ENCODE measurements at regions of chr7 and their contacts with region 1.

Region 1: GRCh38 chr7:107743567-107744344 is at the start of gene CBLL1:
- DNase-seq: peak; percentile 97
- ATAC-seq: peak; percentile 89
- H3K4me3 ChIP-seq: peak within 1 kb of the TSS; percentile 66 to 90 (median 89)
- H3K4me3 Mint-ChIP-seq: peak within 1 kb of the TSS; percentile 99
- H3K27ac ChIP-seq: peak within 1 kb of the TSS; percentile 97
- H3K27ac Mint-ChIP-seq: peak within 1 kb of the TSS; percentile 100
- H3K4me1 ChIP-seq: peaks cover 26 to 30% of the 10 kb centered on the region in 2 donors
- H3K4me1 Mint-ChIP-seq: peaks cover 45% of the 10 kb centered on the region
- H3K27me3 ChIP-seq: no peaks in the 10 kb centered on the region
- H3K27me3 Mint-ChIP-seq: no peaks in the 10 kb centered on the region
- CTCF ChIP-seq: peak; percentile 67
- total RNA-seq, gene CBLL1: 49.9 and 57.2 TPM in 2 replicates

Region 2: GRCh38 chr7:107168233-107169119 is 575.3 kb before region 1 on chr7 and contains the start of gene HBP1:
- CTCF ChIA-PET with region 1: interaction called, 10 read pairs
- POLR2A ChIA-PET with region 1: interaction called, 38 read pairs
- intact Hi-C with region 1: loop called (anchors 1 kb)
- DNase-seq: peak; percentile 99
- ATAC-seq: peak; percentile 80
- H3K4me3 ChIP-seq: peak within 1 kb of the TSS; percentile 88 to 97 (median 95)
- H3K4me3 Mint-ChIP-seq: peak within 1 kb of the TSS; percentile 94
- H3K27ac ChIP-seq: peak within 1 kb of the TSS; percentile 98 to 99
- H3K27ac Mint-ChIP-seq: peak within 1 kb of the TSS; percentile 100
- H3K4me1 ChIP-seq: peaks cover 25 to 37% of the 10 kb centered on the region in 2 donors
- H3K4me1 Mint-ChIP-seq: peaks cover 38% of the 10 kb centered on the region
- H3K27me3 ChIP-seq: no peaks in the 10 kb centered on the region
- H3K27me3 Mint-ChIP-seq: peaks cover 12% of the 10 kb centered on the region
- CTCF ChIP-seq: no peak
- total RNA-seq, gene HBP1: 127 and 137 TPM in 2 replicates

Region 3: GRCh38 chr7:107579885-107580715 is 163.7 kb before region 1 on chr7 and contains the start of gene BCAP29:
- CTCF ChIA-PET with region 1: interaction called, 3 read pairs
- POLR2A ChIA-PET with region 1: no interaction called
- intact Hi-C with region 1: loop called (anchors 1 kb)
- DNase-seq: peak; percentile 87
- ATAC-seq: peak; percentile 98
- H3K4me3 ChIP-seq: peak within 1 kb of the TSS; percentile 75 to 93 (median 85)
- H3K4me3 Mint-ChIP-seq: peak within 1 kb of the TSS; percentile 85
- H3K27ac ChIP-seq: peak within 1 kb of the TSS; percentile 66 to 80
- H3K27ac Mint-ChIP-seq: peak within 1 kb of the TSS; percentile 79
- H3K4me1 ChIP-seq: peaks cover 4 to 7% of the 10 kb centered on the region in 2 donors
- H3K4me1 Mint-ChIP-seq: peaks cover 23% of the 10 kb centered on the region
- H3K27me3 ChIP-seq: no peaks in the 10 kb centered on the region
- H3K27me3 Mint-ChIP-seq: no peaks in the 10 kb centered on the region
- CTCF ChIP-seq: no peak
- total RNA-seq, gene BCAP29: 27.3 and 31.8 TPM in 2 replicates

Region 4: GRCh38 chr7:107725151-107725740 is 18.5 kb before region 1 on chr7:
- CTCF ChIA-PET with region 1: interaction called, 54 read pairs
- POLR2A ChIA-PET with region 1: no interaction called
- intact Hi-C with region 1: no loop called
- DNase-seq: peak; percentile 76
- ATAC-seq: peak; percentile 31
- H3K4me3 ChIP-seq: no peak overlapping the region
- H3K4me3 Mint-ChIP-seq: no peak overlapping the region
- H3K27ac ChIP-seq: no peak overlapping the region
- H3K27ac Mint-ChIP-seq: no peak overlapping the region
- H3K4me1 ChIP-seq: no peaks in the 10 kb centered on the region
- H3K4me1 Mint-ChIP-seq: no peaks in the 10 kb centered on the region
- H3K27me3 ChIP-seq: peaks cover 0 to 6% (median 1%) of the 10 kb centered on the region in 4 experiments
- H3K27me3 Mint-ChIP-seq: peaks cover 23% of the 10 kb centered on the region
- CTCF ChIP-seq: peak; percentile 87

Region 5: GRCh38 chr7:108525985-108526767 is 782.4 kb after region 1 on chr7 and contains the start of gene PNPLA8:
- CTCF ChIA-PET with region 1: no interaction called
- POLR2A ChIA-PET with region 1: no interaction called
- intact Hi-C with region 1: loop called (anchors 5 kb)
- DNase-seq: peak; percentile 100
- ATAC-seq: peak; percentile 90
- H3K4me3 ChIP-seq: peak within 1 kb of the TSS; percentile 77 to 97 (median 94)
- H3K4me3 Mint-ChIP-seq: peak within 1 kb of the TSS; percentile 99
- H3K27ac ChIP-seq: peak within 1 kb of the TSS; percentile 94 to 97
- H3K27ac Mint-ChIP-seq: peak within 1 kb of the TSS; percentile 99
- H3K4me1 ChIP-seq: peaks cover 34 to 37% of the 10 kb centered on the region in 2 donors
- H3K4me1 Mint-ChIP-seq: peaks cover 46% of the 10 kb centered on the region
- H3K27me3 ChIP-seq: no peaks in the 10 kb centered on the region
- H3K27me3 Mint-ChIP-seq: no peaks in the 10 kb centered on the region
- CTCF ChIP-seq: no peak
- total RNA-seq, gene PNPLA8: 56.3 and 57.3 TPM in 2 replicates